Right cardiac atrium (tissue), 5 donors: ENCODE measurements at regions of chr13 and their contacts with region 1.

Region 1: GRCh38 chr13:40666045-40666904 is at the start of gene FOXO1:
- DNase-seq: peak; percentile 93 to 97 (median 97)
- ATAC-seq: peak; percentile 86 to 91
- H3K4me3 ChIP-seq: peak within 1 kb of the TSS; percentile 57
- H3K27ac ChIP-seq: peak within 1 kb of the TSS; percentile 97
- H3K4me1 ChIP-seq: no peaks in the 10 kb centered on the region
- H3K27me3 ChIP-seq: no peaks in the 10 kb centered on the region
- total RNA-seq, gene FOXO1: 21.0 to 33.6 (median 24.5) TPM

Region 2: DNA sequence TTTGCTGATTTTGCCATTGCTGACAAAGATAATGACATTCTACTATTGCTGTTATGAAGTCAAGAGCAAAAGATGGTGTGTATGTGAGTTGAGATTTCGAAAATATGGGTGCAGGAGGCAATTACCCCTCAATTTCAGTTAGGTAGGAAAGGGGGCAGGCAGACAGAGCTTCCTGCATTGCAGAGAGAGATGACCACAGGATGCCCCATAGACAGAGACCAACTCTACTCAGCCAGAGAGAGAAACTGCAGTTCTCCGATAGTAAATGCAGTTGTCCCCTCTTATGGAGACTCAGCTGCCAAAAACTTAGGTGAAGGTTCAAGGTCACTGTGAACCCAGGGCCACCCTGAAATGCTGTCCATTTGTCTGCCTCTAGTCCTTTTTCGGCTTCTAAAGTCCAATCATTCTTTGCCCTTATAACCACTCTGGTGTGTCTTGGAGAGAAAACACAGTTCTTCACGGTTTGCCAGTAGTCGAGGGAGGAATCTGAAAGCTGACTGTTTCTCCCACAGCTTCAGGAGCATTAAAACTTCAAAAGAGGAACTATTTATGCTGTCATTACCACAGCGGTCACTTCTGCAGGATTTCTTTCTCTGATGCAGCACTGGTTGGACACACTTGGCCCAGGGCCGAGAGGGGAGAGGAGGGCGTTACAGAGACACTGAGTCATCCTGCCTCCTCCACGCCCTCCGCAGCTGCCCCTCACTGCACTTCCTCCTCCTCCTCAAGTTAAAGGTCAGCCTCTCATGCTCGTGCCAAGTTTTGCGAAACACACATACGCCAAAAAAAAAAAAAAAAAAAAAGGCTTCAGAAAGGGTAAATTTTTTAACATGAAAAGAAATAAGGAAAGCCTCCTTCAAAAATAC is 264.1 kb before region 1 on chr13:
- intact Hi-C with region 1: loop called in 2 of 4 experiments (anchors 10 kb)
- DNase-seq: peak; percentile 98 to 99 (median 99)
- ATAC-seq: peak; percentile 97
- H3K4me3 ChIP-seq: no peak overlapping the region
- H3K27ac ChIP-seq: peak overlapping the region; percentile 73
- H3K4me1 ChIP-seq: peaks cover 9% of the 10 kb centered on the region
- H3K27me3 ChIP-seq: no peaks in the 10 kb centered on the region

Region 3: DNA sequence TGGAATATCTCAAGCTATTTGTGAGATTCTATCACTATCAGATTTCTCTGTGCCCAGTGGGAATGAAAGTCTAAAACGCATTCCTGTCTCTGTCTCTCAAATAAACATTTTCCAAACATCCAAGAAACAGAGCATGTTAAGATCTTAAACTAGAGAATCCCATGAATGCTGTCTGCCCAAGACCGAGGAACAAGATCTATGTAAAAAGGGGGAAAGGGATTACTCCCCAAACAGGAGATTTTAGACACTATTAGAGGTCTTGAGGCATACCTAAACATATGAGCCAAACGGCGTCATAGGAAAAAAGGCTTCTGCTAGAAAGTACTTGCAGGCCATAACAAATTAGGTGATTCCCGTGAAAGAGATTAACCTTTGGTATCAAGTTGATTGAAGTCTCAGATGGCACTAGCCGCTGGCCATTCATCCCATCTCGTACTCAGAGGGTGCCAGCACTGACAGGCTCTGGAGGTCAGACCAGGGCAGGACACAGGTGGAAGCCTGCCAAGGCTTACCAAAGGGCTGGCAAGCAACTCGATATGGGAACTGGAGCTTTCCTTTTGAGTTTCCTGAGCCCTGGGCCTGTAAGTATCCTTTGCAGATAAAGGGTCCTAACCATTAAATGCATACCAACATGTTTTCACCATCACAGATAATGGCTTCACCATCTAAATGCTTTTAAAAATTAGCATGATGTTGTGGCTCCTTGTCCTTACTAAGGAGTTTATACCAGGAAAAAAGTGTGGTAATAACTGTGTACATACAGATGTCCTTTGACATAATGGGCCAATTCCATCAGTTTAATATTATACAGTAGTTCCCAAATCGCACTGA is 225.1 kb before region 1 on chr13:
- intact Hi-C with region 1: loop called in 1 of 4 experiments (anchors 5 kb)
- DNase-seq: peak; percentile 78 to 92 (median 90)
- ATAC-seq: peak; percentile 67 to 73
- H3K4me3 ChIP-seq: no peak overlapping the region
- H3K27ac ChIP-seq: peak overlapping the region; percentile 59
- H3K4me1 ChIP-seq: peaks cover 17% of the 10 kb centered on the region
- H3K27me3 ChIP-seq: no peaks in the 10 kb centered on the region

Region 4: GRCh38 chr13:40477623-40478608 is 188.4 kb before region 1 on chr13:
- intact Hi-C with region 1: loop called in 1 of 4 experiments (anchors 10 kb)
- DNase-seq: peak; percentile 74 to 88 (median 87)
- ATAC-seq: peak; percentile 89
- H3K4me3 ChIP-seq: no peak overlapping the region
- H3K27ac ChIP-seq: peak overlapping the region; percentile 74
- H3K4me1 ChIP-seq: peaks cover 20% of the 10 kb centered on the region
- H3K27me3 ChIP-seq: no peaks in the 10 kb centered on the region

Region 5: DNA sequence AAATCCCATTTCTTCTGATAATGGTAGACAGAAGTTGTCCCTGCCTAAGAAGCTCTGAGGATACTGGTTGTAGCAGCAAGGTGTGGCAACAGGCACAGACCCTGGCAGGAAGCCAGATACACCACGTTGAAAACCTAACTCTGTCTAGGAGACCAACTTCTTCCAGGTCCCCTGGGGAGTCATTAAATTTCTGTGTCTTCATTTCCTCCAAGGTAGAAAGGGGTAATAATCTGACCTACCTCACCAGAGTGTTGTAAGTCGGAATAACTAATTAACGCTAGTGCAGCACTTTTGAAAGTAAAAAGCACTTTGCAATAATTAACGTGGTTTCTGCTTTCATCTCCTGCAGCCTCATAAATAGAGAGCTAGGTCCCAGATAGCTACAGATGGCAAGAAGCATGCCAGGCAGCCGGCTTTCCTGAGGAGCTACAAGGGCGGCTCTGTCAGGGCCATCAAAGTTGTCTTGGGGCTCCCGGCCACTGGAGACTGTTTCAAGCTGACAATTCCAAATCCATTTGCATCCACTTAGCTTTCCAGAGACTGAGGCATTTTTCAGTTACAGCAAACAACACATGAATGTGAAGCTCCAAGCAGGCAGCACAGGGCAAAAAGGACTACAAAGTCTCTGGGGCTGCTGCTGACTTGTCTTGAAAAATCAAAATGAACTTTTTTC is 176.1 kb before region 1 on chr13:
- intact Hi-C with region 1: loop called in 1 of 4 experiments (anchors 10 kb)
- DNase-seq: no peak
- ATAC-seq: no peak
- H3K4me3 ChIP-seq: no peak overlapping the region
- H3K27ac ChIP-seq: no peak overlapping the region
- H3K4me1 ChIP-seq: peaks cover 7% of the 10 kb centered on the region
- H3K27me3 ChIP-seq: no peaks in the 10 kb centered on the region

Region 6: GRCh38 chr13:40564342-40565001 is 101.8 kb before region 1 on chr13:
- intact Hi-C with region 1: loop called in 2 of 4 experiments (anchors 10 kb)
- DNase-seq: no peak
- ATAC-seq: peak in 1 of 2 donors; percentile 18
- H3K4me3 ChIP-seq: no peak overlapping the region
- H3K27ac ChIP-seq: peak overlapping the region; percentile 77
- H3K4me1 ChIP-seq: peaks cover 37% of the 10 kb centered on the region
- H3K27me3 ChIP-seq: no peaks in the 10 kb centered on the region

Region 7: GRCh38 chr13:40589285-40590109 is 76.8 kb before region 1 on chr13:
- intact Hi-C with region 1: loop called in 1 of 4 experiments (anchors 10 kb)
- DNase-seq: peak in 1 of 3 donors; percentile 48
- ATAC-seq: peak; percentile 81 to 90
- H3K4me3 ChIP-seq: no peak overlapping the region
- H3K27ac ChIP-seq: peak overlapping the region; percentile 5
- H3K4me1 ChIP-seq: peaks cover 20% of the 10 kb centered on the region
- H3K27me3 ChIP-seq: no peaks in the 10 kb centered on the region

Region 8: DNA sequence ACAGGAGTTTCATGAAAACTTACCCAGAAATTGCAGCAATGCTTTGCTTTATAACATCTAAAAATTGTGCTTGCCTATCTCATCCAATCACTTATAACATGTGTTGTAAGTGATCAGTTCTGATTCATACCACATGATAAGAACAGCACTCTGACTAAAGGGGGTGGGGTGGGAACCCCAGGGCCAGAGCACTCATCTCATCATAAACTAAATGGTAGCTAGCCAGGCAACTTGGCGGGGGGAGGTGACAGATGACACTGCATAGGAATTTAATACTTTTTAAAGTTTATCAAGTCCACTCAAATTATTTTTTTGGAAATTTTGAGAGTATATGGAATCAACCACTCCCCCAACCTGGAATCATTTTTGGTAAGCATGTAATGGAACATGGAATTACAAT is 41.9 kb before region 1 on chr13:
- intact Hi-C with region 1: no loop called
- DNase-seq: no peak
- ATAC-seq: peak in 1 of 2 donors; percentile 41
- H3K4me3 ChIP-seq: no peak overlapping the region
- H3K27ac ChIP-seq: no peak overlapping the region
- H3K4me1 ChIP-seq: peaks cover 2% of the 10 kb centered on the region
- H3K27me3 ChIP-seq: no peaks in the 10 kb centered on the region